Ovary (tissue), 10 donors: ENCODE measurements at regions of chr9 and their contacts with region 1.

Region 1: GRCh38 chr9:90860826-90861225 is 59.2 kb downstream of the SYK start:
- DNase-seq: no peak
- H3K4me3 ChIP-seq: no peak overlapping the region
- H3K27ac ChIP-seq: no peak overlapping the region
- H3K4me1 ChIP-seq: no peaks in the 10 kb centered on the region
- H3K27me3 ChIP-seq: no peaks in the 10 kb centered on the region
- CTCF ChIP-seq: no peak
- EP300 ChIP-seq: no peak
- POLR2A ChIP-seq: no peak

Region 2: DNA sequence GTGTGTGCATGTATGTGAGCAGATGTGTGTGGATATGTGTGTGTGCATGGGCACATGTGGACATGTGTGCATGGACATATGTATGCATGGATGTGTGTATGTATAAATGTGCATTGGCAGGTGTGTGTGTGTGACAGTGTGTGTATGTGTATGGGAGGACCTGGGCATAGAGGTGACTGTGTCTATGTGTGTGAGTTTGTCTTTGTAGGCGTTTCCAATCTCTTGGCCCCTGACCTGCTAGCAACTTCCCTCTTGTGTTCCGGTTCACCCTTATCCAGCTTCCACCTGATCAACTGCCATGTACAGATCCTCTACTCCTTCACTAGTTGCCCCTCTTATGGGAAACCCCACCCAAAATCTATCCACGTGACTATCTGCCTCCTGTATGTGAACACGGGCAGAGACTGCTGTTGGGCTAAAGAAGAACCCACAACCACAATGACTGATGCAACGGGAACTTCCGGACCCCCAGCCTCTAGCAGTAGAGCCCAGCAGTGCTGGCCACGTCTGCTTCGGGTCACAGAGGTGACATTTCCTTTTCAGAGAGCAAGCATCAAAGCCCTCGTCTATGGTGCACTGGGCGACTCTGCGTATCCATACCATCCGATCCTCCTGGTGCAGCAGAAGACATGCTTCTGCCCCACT is 1281.0 kb before region 1 on chr9:
- intact Hi-C with region 1: loop called in 2 of 4 experiments (anchors 5 to 10 kb)
- DNase-seq: no peak
- H3K4me3 ChIP-seq: no peak overlapping the region
- H3K27ac ChIP-seq: no peak overlapping the region
- H3K4me1 ChIP-seq: no peaks in the 10 kb centered on the region
- H3K27me3 ChIP-seq: no peaks in the 10 kb centered on the region
- CTCF ChIP-seq: no peak
- EP300 ChIP-seq: no peak
- POLR2A ChIP-seq: no peak